B cell (primary cell): ENCODE measurements at regions of chr7 and their contacts with region 1.

Region 1: GRCh38 chr7:115662120-115662519 is 368.4 kb downstream of the TFEC start:
- DNase-seq: no peak
- ATAC-seq: no peak
- H3K4me3 ChIP-seq: no peak overlapping the region
- H3K4me3 Mint-ChIP-seq: no peak overlapping the region
- H3K27ac ChIP-seq: no peak overlapping the region
- H3K27ac Mint-ChIP-seq: no peak overlapping the region
- H3K4me1 ChIP-seq: no peaks in the 10 kb centered on the region
- H3K4me1 Mint-ChIP-seq: no peaks in the 10 kb centered on the region
- H3K27me3 ChIP-seq: no peaks in the 10 kb centered on the region
- H3K27me3 Mint-ChIP-seq: no peaks in the 10 kb centered on the region
- CTCF ChIP-seq: no peak

Region 2: GRCh38 chr7:115701141-115701540 is 39.0 kb after region 1 on chr7:
- CTCF ChIA-PET with region 1: no interaction called
- POLR2A ChIA-PET with region 1: no interaction called
- intact Hi-C with region 1: no loop called
- DNase-seq: no peak
- ATAC-seq: no peak
- H3K4me3 ChIP-seq: no peak overlapping the region
- H3K4me3 Mint-ChIP-seq: no peak overlapping the region
- H3K27ac ChIP-seq: no peak overlapping the region
- H3K27ac Mint-ChIP-seq: no peak overlapping the region
- H3K4me1 ChIP-seq: no peaks in the 10 kb centered on the region
- H3K4me1 Mint-ChIP-seq: no peaks in the 10 kb centered on the region
- H3K27me3 ChIP-seq: no peaks in the 10 kb centered on the region
- H3K27me3 Mint-ChIP-seq: no peaks in the 10 kb centered on the region
- CTCF ChIP-seq: no peak

Region 3: GRCh38 chr7:117530390-117530789 is 1868.3 kb after region 1 on chr7:
- CTCF ChIA-PET with region 1: no interaction called
- POLR2A ChIA-PET with region 1: no interaction called
- intact Hi-C with region 1: loop called (anchors 5 kb)
- DNase-seq: no peak
- ATAC-seq: no peak
- H3K4me3 ChIP-seq: no peak overlapping the region
- H3K4me3 Mint-ChIP-seq: no peak overlapping the region
- H3K27ac ChIP-seq: no peak overlapping the region
- H3K27ac Mint-ChIP-seq: no peak overlapping the region
- H3K4me1 ChIP-seq: no peaks in the 10 kb centered on the region
- H3K4me1 Mint-ChIP-seq: no peaks in the 10 kb centered on the region
- H3K27me3 ChIP-seq: no peaks in the 10 kb centered on the region
- H3K27me3 Mint-ChIP-seq: no peaks in the 10 kb centered on the region
- CTCF ChIP-seq: no peak